ENCODE measurements at regions of chr15 and their contacts with region 1.

Region 1: DNA sequence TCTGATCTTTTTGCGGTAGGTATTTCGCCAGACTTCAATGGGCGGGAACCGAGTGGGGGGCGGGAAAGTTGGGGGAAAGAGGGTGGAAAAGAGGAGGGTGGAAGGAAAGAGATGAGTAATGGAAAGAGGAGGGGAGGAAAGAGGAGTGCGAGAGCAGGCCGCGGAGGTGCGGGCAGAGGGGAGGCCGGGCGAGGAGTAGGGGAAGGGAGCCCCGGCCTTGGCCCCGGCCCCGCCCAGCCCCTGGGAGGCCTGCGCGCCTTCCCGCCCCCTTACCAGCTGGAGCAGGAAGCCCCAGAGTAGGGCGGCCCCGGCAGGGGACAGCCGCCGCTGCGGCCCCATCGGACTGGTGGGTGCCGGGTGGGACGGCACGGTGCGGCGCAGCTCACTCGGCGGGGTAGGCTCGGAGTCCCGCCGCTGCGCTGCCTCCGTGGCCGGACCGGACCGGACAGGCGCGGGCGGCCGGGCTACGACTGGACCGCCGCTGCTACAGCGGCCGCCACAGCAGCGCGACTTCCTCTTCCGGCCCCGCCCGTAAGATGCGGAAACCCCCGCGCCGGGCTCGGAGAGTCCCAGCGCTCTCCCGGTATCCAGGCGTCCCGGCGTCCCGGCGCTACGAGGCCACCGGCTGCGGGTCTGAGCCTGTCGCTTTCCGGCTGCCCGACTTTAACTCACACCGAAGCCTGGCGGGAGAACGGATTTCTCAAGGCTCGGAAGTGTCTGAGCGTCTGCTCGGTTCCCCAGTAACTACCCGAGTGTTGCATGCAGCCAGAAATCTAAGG is at the start of gene SPPL2A:
- DNase-seq: peak; percentile 39 to 90
- H3K4me3 ChIP-seq: peak within 1 kb of the TSS; percentile 93 to 96
- H3K27ac ChIP-seq: peak within 1 kb of the TSS; percentile 99 to 100
- H3K4me1 ChIP-seq: peaks cover 0 to 17% of the 10 kb centered on the region in 2 donors
- H3K27me3 ChIP-seq: no peaks in the 10 kb centered on the region
- CTCF ChIP-seq: no peak
- total RNA-seq, gene SPPL2A: 785 TPM

Region 2: GRCh38 chr15:50354838-50355618 is 410.4 kb before region 1 on chr15 and contains the start of gene GABPB1:
- intact Hi-C with region 1: loop called (anchors 10 kb)
- DNase-seq: peak; percentile 31 to 90
- H3K4me3 ChIP-seq: peak within 1 kb of the TSS; percentile 95 to 99
- H3K27ac ChIP-seq: peak within 1 kb of the TSS; percentile 99 to 100
- H3K4me1 ChIP-seq: peaks cover 12 to 36% of the 10 kb centered on the region in 2 donors
- H3K27me3 ChIP-seq: no peaks in the 10 kb centered on the region
- CTCF ChIP-seq: no peak
- total RNA-seq, gene GABPB1: 10.9 TPM

Region 3: GRCh38 chr15:50686468-50687301 is 78.7 kb before region 1 on chr15 and contains the start of gene TRPM7:
- intact Hi-C with region 1: loop called (anchors 1 kb)
- DNase-seq: peak; percentile 24 to 92
- H3K4me3 ChIP-seq: peak within 1 kb of the TSS; percentile 71 to 80
- H3K27ac ChIP-seq: peak within 1 kb of the TSS; percentile 91 to 96
- H3K4me1 ChIP-seq: peaks cover 0 to 21% of the 10 kb centered on the region in 2 donors
- H3K27me3 ChIP-seq: no peaks in the 10 kb centered on the region
- CTCF ChIP-seq: no peak
- total RNA-seq, gene TRPM7: 24.1 TPM

Region 4: DNA sequence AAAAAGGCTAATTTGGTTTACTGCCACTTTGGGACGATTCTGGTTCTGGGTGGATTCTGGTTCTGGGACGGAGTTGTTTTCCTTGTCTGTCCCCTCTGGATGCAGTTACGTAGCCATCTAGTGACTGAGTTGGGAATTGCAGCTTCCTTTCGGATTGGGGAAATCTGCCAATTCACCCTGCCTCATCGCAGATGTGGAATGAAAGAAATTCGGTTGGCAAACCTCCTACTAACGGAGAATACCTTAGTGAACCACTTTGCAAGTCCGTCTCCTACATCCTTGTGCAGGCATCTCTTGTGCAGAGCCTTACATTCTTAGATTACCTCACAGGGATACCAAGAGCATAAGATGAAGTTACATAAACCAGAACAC is 111.6 kb after region 1 on chr15:
- intact Hi-C with region 1: loop called (anchors 5 kb)
- DNase-seq: peak; percentile 20 to 92
- H3K4me3 ChIP-seq: peak overlapping the region; percentile 41 to 55
- H3K27ac ChIP-seq: no peak overlapping the region
- H3K4me1 ChIP-seq: no peaks in the 10 kb centered on the region
- H3K27me3 ChIP-seq: no peaks in the 10 kb centered on the region
- CTCF ChIP-seq: peak; percentile 81 to 99 (median 98)

Measured in ascending aorta (tissue), 2 donors.